Common myeloid progenitor, CD34-positive (primary cell): ENCODE measurements at regions of chrX and their contacts with region 1.

Region 1: GRCh38 chrX:43958529-43958928 is 14.7 kb downstream of the NDP start:
- DNase-seq: peak; percentile 74 to 87 (median 82)
- H3K4me3 ChIP-seq: no peak overlapping the region
- H3K27ac ChIP-seq: no peak overlapping the region
- H3K4me1 ChIP-seq: no peaks in the 10 kb centered on the region
- H3K27me3 ChIP-seq: peaks cover 0 to 6% (median 0%) of the 10 kb centered on the region in 5 experiments

Region 2: GRCh38 chrX:44025555-44025954 is 67.0 kb after region 1 on chrX:
- CTCF ChIA-PET with region 1: interaction called, 11 read pairs
- POLR2A ChIA-PET with region 1: no interaction called
- DNase-seq: no peak
- H3K4me3 ChIP-seq: no peak overlapping the region
- H3K27ac ChIP-seq: no peak overlapping the region
- H3K4me1 ChIP-seq: no peaks in the 10 kb centered on the region
- H3K27me3 ChIP-seq: peaks cover 0 to 16% (median 0%) of the 10 kb centered on the region in 5 experiments

Region 3: DNA sequence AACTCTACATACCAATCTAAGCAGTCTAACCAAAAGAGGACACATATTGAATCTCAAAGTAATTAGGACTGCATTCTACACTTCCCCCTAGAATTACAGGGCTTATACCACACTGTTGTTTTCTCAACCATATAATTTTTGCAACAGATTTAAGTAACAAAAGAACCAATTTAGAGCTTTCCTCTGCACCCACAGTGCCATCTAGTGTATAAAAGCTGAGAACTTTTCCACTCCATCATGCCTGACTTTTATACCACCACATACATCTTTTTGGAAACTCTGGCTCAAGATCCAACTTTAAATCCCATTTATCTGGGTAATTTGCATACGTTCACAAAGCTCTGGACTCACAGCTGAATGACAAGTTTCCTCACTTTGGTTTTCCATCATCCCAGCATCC is 285.5 kb after region 1 on chrX:
- CTCF ChIA-PET with region 1: interaction called, 19 read pairs
- POLR2A ChIA-PET with region 1: no interaction called
- DNase-seq: peak; percentile 23 to 63 (median 54)
- H3K4me3 ChIP-seq: no peak overlapping the region
- H3K27ac ChIP-seq: no peak overlapping the region
- H3K4me1 ChIP-seq: peaks cover 0 to 5% (median 4%) of the 10 kb centered on the region in 4 experiments
- H3K27me3 ChIP-seq: peaks cover 0 to 6% (median 0%) of the 10 kb centered on the region in 5 experiments